ENCODE measurements at regions of chr11 and their contacts with region 1.

Region 1: DNA sequence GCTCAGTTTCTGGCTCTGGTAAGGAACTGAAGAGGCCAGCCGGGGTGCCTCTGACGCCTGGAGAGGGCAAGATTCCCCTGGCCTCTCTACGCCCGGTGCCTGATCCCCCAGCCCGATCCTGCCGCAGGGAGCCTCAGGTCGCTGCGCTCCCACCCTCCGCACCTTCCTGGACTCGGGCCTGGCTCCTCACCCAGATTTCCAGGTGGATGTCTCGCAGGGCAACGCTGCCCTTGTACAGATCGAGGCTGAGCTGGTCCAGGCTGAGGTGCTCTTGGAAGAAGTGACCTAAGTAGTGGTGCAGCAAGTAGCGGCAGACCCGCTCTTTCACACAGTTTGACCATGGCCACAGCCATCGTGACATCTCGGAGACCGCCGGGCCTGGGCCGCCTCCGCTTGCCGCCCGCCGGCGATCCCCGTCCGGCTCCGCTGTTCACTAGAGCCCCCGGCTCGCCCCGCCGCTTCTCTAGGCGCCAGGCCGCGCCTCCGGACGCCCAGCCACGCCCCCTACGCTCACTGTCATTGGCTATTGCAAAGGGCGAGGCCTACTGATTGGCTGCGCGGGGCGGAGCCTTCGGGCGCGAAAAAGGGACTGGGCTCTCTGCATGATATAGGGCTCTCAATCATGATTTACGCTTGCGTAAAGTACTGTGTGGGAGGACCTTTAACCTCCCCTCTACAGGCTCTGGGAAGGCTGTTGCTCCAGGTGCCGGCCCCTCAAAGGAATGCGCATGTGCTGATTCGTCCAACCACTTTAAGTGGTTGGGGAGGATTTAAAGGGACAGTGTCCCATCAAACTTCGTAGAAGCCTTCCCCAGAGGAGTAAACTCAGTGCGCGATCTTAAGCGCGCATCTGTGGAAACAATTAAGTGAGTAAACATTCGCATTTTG is at the start of gene ATG2A:
- DNase-seq: peak; percentile 100
- ATAC-seq: peak; percentile 97
- H3K4me3 ChIP-seq: peak within 1 kb of the TSS; percentile 78
- H3K27ac ChIP-seq: peak within 1 kb of the TSS; percentile 69
- H3K4me1 ChIP-seq: peaks cover 7% of the 10 kb centered on the region
- H3K27me3 ChIP-seq: no peaks in the 10 kb centered on the region
- CTCF ChIP-seq: no peak
- POLR2A ChIP-seq: peak; percentile 89
- RAD21 ChIP-seq: no peak
- total RNA-seq, gene ATG2A: 3.2 and 3.6 TPM in 2 replicates

Region 2: GRCh38 chr11:64854534-64855429 is 62.2 kb before region 1 on chr11:
- CTCF ChIA-PET with region 1: no interaction called
- POLR2A ChIA-PET with region 1: no interaction called
- dilution Hi-C with region 1: no loop called
- in situ Hi-C with region 1: no loop called
- intact Hi-C with region 1: loop called (anchors 2 kb)
- DNase-seq: peak; percentile 91
- ATAC-seq: peak; percentile 81
- H3K4me3 ChIP-seq: no peak overlapping the region
- H3K27ac ChIP-seq: peak overlapping the region; percentile 74
- H3K4me1 ChIP-seq: peaks cover 34% of the 10 kb centered on the region
- H3K27me3 ChIP-seq: no peaks in the 10 kb centered on the region
- CTCF ChIP-seq: no peak
- POLR2A ChIP-seq: no peak; the same call in 1 of the 2 replicates
- RAD21 ChIP-seq: no peak; the same call in 1 of the 2 replicates

Region 3: GRCh38 chr11:64894070-64894796 is 22.8 kb before region 1 on chr11:
- CTCF ChIA-PET with region 1: no interaction called
- POLR2A ChIA-PET with region 1: no interaction called
- dilution Hi-C with region 1: no loop called
- in situ Hi-C with region 1: no loop called
- intact Hi-C with region 1: no loop called
- DNase-seq: peak; percentile 51
- ATAC-seq: peak; percentile 93
- H3K4me3 ChIP-seq: no peak overlapping the region
- H3K27ac ChIP-seq: no peak overlapping the region
- H3K4me1 ChIP-seq: no peaks in the 10 kb centered on the region
- H3K27me3 ChIP-seq: no peaks in the 10 kb centered on the region
- CTCF ChIP-seq: peak; percentile 89
- POLR2A ChIP-seq: no peak
- RAD21 ChIP-seq: peak; percentile 85

Measured in IMR-90 (cell line).